Cardiac septum (tissue), 1 donor: ENCODE measurements at regions of chr5 and their contacts with region 1.

Region 1: DNA sequence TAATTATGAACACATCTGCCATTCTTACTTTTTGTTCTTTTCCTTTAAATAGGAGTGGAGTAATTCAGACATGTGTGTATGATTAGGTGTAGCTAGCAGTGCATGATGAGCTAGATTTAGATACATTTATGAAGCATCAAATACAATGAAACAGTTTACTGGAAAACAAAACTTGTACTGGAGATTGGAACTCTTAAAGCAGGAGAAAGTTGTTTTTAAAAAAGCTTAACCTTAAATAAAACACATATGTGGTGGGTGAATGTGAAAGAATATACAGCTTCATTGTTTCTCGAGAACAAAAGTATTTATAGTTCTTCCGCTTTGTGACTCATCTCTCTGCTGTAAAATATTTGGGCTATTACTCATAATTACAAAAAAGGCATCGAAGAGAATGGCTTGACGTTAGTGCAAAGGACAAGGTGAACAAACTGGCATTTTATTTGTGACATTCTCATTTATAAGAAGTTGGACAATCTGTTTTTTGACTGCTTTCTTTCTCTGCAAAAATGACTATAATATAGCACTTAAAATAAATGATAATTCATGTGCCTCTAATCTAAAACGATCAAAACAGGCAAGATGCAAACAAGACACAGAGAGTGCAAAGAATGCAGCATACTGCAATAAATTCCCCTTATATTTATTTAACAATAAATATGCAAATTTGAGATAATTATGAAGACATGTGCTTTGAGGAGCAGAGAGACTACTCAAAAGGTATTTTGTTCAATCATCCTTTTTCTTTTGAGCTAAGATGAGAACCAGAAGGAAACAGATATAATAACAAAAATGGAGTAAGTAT is 478.8 kb downstream of the CETN3 start:
- DNase-seq: no peak

Region 2: DNA sequence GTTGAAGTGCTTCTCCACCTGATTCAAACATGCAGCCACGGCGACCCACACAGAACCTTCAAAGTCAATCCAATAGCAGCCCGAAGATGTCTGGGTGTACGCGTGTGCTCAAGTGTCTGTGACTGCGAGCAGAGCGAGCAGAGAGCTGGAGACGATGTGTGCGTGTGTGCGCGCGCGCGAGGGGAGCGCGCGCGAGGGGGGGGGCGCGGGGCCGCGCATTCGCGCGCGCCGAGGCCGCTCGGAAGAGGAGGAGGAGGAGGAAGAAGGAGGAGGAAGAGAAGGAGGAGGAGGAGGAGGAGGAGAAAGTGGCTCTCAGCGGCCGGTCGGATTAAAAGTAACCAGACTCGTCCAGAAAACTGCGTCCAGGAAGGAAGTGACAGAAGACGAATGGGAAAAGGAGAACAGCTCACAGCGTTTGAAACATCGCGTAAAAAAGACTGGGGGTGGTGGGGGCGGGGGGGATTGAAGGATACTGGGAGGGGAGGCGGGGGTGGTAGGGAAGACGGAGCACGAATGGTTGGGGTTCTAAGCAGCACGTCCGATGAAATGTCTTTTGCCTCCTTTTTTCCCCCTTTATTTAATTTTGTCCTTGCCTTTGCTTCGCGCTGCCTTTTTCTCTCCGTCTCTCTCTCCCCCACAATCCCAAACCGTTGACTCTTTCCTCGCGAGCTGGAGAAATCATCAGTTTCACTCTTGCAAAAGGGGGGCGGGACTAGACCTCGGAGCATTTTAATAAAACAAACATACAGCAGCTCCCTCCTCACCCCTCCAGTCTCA is 1047.5 kb before region 1 on chr5 and contains the start of gene MEF2C:
- intact Hi-C with region 1: loop called (anchors 10 kb)
- DNase-seq: peak; percentile 87
- total RNA-seq, gene MEF2C: 64.6 TPM

Region 3: DNA sequence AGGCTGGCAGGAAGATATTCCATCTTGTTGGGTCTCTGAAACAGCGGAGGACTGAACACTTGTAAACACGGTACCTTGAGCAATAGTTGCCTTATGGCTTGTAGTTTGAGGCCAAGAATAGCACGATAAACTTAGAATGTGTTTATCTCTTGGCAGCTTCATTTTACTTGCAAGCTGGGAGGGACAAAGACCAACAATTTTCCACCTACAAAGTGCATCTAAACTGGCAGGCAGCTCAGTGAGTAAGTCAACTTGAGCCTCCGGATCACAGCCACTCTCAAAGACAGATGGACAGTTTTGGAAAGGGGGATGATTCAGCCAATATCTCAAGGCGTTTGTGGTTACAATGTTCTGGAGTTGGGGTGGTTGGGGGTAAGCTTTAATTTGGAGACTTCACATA is 173.8 kb before region 1 on chr5:
- intact Hi-C with region 1: no loop called
- DNase-seq: no peak

Region 4: DNA sequence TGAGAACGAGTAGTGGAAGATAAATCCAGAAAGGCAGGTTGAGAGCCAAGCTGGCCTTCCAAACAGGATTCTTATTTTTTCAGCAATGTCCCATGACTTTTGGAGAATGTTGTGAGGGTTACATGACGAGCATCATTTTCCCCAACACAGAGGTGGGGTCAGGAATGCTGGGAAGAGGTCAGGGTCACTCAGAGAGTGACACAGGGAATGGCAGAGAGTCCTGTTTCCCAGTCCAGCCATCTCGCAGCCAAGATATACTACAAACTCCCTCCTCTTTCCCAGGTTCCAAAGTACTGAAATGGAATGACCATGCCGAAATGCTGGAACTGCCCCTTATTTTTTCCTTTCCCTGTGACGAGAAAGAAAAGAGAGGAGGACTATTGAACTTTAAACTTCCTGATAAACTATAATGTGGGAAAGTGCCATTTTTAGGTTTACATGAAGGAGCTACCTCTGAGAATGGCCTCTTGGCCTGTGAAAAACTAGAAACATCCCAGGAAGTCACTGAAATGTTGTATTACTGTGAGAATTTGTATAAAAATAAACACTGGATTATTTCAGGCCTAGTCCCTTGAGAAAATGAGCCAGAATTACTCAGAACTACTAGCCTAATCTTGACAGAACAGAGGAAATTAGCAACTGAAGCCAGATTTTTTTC is 58.3 kb after region 1 on chr5:
- intact Hi-C with region 1: loop called (anchors 1 kb)
- DNase-seq: peak; percentile 56

Region 5: DNA sequence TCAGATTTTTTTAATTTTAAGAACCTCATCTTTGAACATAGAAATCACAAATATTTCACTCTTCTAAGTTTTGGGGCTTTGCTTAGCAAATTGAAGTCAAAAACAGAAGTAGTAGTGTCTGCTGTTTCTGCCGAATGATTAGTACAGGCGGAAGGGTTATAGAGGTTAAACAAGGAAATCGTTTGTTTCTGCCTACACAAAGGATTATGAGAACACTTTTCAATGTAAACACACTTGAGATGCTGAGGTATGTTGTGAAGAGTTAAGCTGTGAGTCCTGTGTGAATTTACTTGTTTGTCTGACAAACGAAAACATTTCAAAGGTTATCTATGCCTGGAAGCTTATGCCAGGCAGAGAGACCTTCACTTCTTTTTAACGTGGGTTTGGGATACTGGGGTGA is 254.0 kb after region 1 on chr5:
- intact Hi-C with region 1: loop called (anchors 10 kb)
- DNase-seq: no peak